ENCODE measurements at regions of chr2 and their contacts with region 1.

Region 1: DNA sequence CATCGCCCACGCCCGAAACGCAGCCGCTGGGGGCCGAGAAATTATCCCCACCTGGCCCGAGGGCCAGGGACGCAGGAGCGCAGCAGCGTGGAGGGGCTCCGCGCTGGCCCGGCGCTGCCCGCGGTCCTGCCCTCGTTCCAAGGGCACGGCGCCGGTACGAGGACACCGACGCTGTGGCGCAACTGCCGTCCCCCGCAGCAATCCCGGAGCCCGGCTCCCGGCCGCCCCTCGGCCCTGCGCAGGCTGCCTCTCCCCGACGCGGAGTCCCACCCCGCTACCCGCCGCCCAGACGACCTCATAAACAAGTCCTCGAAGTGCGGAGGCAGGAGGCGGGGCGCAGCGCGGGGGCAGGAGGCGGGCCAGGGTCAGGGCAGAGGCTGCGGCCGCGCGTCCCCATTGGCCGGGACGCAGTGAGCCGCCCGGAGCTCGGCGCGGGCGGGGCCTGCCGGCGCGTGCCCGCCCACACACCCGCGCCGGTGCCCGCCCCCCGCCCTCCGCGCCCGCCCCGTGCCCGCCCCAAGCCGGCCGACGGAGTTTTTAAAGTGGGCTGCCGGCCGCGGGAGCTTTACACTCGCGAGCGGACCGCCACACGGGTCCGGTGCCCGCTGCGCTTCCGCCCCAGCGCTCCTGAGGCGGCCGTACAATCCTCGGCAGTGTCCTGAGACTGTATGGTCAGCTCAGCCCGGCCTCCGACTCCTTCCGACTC is at the start of gene EPAS1:
- DNase-seq: peak; percentile 87
- H3K4me3 Mint-ChIP-seq: peak within 1 kb of the TSS; percentile 86
- H3K27ac Mint-ChIP-seq: peak within 1 kb of the TSS; percentile 75
- H3K4me1 Mint-ChIP-seq: peaks cover 8% of the 10 kb centered on the region
- H3K27me3 Mint-ChIP-seq: no peaks in the 10 kb centered on the region
- CTCF ChIP-seq: no peak
- total RNA-seq, gene EPAS1: 146 and 200 TPM in 2 replicates

Region 2: DNA sequence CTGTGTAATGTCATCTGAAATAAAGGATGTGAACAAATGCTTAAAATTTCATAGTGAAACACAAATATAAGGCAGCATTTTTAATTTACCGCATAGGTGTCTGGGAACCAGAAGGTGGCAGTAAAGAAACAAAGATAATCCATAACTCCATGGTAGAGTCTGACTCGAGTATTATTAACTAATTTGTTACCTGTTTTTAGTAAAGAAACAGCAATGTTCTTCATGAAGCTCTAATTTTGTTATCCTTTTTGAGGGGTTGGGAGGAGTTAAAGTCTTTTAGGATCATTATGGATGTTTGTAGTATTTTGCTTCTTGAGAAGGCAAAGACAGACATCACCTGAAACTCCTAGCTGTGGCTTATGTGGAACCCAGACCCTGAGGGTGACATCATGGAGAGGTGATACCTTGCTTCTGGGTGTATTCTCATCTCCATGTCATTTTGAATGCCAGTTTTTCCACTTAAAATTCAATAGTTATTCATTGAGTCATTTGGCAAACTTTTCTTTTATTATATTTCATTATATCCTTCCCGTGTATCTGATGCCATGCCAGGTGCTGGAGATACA is 286.0 kb before region 1 on chr2:
- CTCF ChIA-PET with region 1: interaction called, 5 read pairs
- POLR2A ChIA-PET with region 1: interaction called, 3 read pairs
- intact Hi-C with region 1: loop called (anchors 1 kb)
- DNase-seq: peak; percentile 50
- H3K4me3 Mint-ChIP-seq: no peak overlapping the region
- H3K27ac Mint-ChIP-seq: no peak overlapping the region
- H3K4me1 Mint-ChIP-seq: no peaks in the 10 kb centered on the region
- H3K27me3 Mint-ChIP-seq: no peaks in the 10 kb centered on the region
- CTCF ChIP-seq: peak; percentile 54

Region 3: DNA sequence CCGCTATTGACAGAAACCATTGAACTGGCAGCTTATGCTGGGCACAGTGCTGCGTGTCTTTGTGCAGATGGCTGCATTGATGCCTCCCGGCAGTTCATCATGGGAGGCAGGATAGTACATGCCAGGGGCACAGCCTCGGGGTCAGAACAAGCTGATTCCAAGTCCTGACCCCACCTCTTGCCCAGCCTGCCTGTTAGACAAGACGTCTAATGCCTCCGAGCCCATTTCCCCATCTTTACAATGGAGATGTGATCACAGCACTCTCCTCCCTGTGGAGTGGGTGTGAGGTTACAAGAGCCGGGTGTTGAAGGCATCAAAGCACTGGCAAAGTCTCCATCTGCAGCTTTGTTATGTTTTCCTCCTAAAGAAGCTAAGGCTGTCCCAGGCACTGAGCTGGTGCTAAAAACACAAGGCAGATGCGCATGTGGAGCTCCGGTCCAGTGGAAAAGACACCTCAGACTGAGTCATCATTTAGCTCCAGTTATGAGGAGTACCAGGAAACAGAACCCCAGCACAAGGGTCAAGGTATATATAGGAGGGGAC is 125.5 kb before region 1 on chr2:
- CTCF ChIA-PET with region 1: interaction called, 3 read pairs
- POLR2A ChIA-PET with region 1: interaction called, 15 read pairs
- intact Hi-C with region 1: loop called (anchors 2 kb)
- DNase-seq: peak; percentile 89
- H3K4me3 Mint-ChIP-seq: peak overlapping the region; percentile 35
- H3K27ac Mint-ChIP-seq: peak overlapping the region; percentile 70
- H3K4me1 Mint-ChIP-seq: peaks cover 36% of the 10 kb centered on the region
- H3K27me3 Mint-ChIP-seq: no peaks in the 10 kb centered on the region
- CTCF ChIP-seq: no peak

Region 4: DNA sequence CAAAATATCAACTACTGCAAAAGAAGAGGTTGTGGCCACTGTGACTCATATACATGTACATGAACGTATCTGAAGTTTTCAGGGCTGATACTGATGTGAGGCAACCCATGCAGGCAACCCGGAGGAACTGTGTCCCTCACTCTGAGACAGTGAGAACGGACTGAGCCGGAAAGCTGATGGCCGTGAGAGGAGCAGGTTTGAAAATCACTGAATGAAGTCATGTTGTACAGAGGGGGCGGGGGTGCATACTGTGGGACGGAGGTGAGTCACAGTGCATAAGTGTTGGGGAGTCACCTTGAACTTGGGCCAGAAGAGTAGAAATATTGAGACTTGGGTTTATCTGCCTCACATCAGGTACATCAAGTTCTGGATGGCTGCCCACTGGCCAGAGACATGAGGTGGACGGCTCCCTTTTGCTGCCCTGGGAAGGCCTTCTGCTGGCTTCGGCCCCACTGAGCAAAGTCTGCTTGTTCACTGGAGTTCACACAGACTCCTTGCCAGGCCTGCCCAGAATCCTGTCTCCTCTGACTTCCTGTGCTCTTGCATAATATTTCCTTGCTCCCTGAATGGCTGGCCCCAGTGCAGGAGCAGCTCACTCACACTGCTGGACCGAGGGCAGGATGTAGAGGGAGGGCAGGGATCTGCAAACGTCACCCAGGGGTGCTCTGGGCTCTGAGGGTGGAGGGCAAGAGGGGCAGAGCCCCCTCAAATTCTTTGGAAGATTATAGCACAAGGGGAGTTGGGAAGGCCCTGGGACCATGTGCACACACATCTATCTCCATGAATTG is 18.3 kb after region 1 on chr2:
- CTCF ChIA-PET with region 1: interaction called, 7 read pairs
- POLR2A ChIA-PET with region 1: interaction called, 129 read pairs
- intact Hi-C with region 1: loop called (anchors 1 kb)
- DNase-seq: peak; percentile 100
- H3K4me3 Mint-ChIP-seq: peak overlapping the region; percentile 26
- H3K27ac Mint-ChIP-seq: peak overlapping the region; percentile 46
- H3K4me1 Mint-ChIP-seq: peaks cover 64% of the 10 kb centered on the region
- H3K27me3 Mint-ChIP-seq: no peaks in the 10 kb centered on the region
- CTCF ChIP-seq: no peak

Region 5: DNA sequence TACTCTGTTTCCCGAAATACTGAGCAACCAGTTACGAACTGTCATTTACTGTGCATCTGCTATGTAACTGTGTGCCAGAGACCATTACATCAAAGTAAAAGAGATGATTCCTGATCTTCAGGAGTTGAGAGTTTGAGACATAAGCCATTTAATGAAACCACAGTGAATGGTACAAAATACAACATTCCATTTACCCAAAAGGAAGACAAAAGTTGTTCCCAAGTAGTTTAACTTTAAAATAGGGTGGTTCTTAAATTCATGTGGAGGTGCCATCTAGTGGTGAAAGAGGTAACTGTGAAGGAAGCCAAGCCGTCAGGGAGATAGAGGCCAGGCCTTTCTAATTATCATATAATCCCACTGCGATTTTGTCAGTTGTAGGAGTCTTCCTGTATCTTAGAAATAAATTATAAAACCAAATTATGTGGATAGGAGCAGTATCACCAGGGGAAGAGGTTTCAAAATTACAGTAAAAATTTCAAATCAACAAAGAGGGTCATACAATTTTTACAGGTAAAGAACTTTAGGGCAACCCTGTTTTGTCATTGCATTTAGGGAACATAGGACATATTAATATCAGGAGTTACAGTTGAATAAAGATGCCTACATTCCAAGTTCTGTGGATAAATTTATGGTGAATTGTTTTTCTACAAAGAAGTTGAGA is 67.9 kb after region 1 on chr2:
- CTCF ChIA-PET with region 1: interaction called, 7 read pairs
- POLR2A ChIA-PET with region 1: interaction called, 6 read pairs
- intact Hi-C with region 1: loop called (anchors 1 kb)
- DNase-seq: peak; percentile 67
- H3K4me3 Mint-ChIP-seq: no peak overlapping the region
- H3K27ac Mint-ChIP-seq: no peak overlapping the region
- H3K4me1 Mint-ChIP-seq: peaks cover 9% of the 10 kb centered on the region
- H3K27me3 Mint-ChIP-seq: no peaks in the 10 kb centered on the region
- CTCF ChIP-seq: peak; percentile 73